ENCODE measurements at regions of chr1 and their contacts with region 1.

Region 1: GRCh38 chr1:205375835-205376545 is 19.3 kb upstream of the KLHDC8A start:
- DNase-seq: no peak
- H3K4me3 ChIP-seq: no peak overlapping the region
- CTCF ChIP-seq: peak; percentile 9

Region 2: GRCh38 chr1:205391386-205391785 is 15.4 kb after region 1 on chr1:
- CTCF ChIA-PET with region 1: interaction called, 61 read pairs
- POLR2A ChIA-PET with region 1: no interaction called
- DNase-seq: no peak
- H3K4me3 ChIP-seq: no peak overlapping the region
- CTCF ChIP-seq: no peak

Measured in AG04449 (cell line).